AG04449 (cell line): ENCODE measurements at regions of chr1 and their contacts with region 1.

Region 1: DNA sequence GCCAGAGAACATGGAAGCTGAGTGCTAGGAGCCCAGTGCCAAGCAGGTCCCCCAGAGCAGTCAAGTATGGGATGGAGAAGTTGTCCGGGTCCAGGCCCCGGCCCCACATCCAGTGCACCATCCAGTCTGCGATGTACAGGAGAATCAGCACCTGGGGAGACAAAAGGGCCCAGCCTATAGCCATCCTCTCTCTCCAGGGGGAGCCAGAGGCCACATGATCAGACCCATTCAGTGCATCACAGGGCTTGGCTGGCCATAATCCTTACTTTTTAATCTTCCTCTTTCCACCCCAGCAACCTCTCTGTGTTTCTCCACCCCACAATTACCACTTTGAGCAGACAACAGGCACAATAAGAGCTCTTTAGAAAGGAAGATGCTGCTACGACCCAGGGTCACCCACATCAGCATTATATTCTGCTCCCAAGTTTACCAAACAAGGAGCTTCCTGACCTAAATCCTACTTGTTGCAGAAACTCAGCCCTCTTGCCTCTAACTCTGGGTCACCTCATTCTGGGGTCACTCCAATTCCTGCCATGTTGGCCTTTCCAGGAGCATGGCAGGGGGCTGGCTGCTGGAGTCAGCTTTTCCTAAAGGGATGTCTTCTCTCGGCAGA is 16.4 kb upstream of the RAB29 start:
- DNase-seq: no peak
- H3K4me3 ChIP-seq: no peak overlapping the region
- CTCF ChIP-seq: peak; percentile 89

Region 2: DNA sequence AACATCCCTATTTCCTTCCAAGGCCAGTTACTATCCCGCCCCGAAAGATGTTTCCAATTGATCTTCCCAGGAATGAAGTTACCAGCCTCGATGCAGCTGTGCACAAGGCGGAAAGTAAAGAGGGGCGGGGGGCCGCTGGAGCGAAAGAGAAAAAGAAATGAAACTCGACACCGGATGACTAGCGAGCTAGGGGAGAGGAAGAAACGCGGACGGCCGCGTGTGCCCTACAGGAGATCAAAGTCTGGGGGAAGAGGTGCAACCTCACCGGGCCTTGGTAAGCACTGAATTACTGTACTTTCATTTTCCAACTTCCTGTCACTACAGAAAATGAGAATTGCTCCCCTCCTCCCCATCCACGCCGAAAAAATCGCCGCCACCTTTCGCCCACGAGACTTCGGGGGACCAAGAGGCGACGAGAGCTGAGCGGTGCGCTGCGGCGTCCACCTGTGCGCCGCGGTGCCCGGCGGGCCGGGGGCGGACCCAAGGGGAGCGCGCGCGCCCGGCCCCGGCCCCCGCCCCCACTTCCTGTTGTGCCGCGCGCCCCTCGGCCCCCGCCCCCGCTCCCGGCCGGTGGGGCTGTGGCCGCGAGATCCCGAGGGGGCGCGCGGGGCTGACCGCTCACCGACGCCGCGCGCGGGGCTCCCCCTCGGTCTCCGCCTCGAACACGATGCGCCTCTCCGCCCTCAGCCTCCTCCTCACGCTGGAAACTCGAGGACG is 160.5 kb before region 1 on chr1:
- CTCF ChIA-PET with region 1: no interaction called
- POLR2A ChIA-PET with region 1: no interaction called
- DNase-seq: no peak
- H3K4me3 ChIP-seq: peak overlapping the region; percentile 74
- CTCF ChIP-seq: no peak

Region 3: GRCh38 chr1:205749234-205750137 is 42.2 kb before region 1 on chr1:
- CTCF ChIA-PET with region 1: no interaction called
- POLR2A ChIA-PET with region 1: no interaction called
- DNase-seq: peak; percentile 67
- H3K4me3 ChIP-seq: peak overlapping the region; percentile 83
- CTCF ChIP-seq: no peak

Region 4: GRCh38 chr1:205775015-205775716 is 16.5 kb before region 1 on chr1 and contains the start of gene RAB29:
- CTCF ChIA-PET with region 1: interaction called, 19 read pairs
- POLR2A ChIA-PET with region 1: no interaction called
- DNase-seq: no peak
- H3K4me3 ChIP-seq: peak within 1 kb of the TSS; percentile 82
- CTCF ChIP-seq: no peak

Region 5: DNA sequence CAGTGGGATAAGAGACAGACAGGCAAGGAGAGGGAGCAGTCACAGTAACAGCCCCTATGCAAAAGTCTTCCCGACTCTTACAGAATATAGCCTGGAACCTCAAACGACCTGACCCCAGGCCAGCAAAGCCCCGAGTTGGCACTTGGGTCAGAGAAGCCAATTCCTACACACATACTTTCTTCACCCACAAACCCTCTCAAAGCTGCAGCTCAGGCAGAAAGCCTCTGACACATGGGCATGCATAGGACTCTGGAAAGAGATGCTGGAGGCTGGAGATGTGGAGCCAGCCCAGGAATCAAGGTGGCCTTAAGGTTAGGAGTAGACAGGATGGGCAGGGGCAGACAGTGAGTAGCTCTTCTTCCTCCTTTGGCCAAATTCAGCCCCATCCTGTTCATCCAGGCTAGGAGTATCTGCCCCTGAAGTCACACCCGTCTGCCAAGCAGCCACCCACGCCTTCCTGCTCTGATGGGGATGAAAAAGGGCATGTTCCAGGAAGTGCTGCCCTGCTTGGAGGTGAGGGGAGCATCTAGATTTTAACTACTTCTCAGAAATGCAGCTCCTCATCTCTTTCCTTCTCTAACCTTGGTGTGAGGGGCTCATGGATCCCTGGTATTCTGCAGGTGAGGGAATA is 13.5 kb after region 1 on chr1:
- CTCF ChIA-PET with region 1: interaction called, 53 read pairs
- POLR2A ChIA-PET with region 1: no interaction called
- DNase-seq: no peak
- H3K4me3 ChIP-seq: no peak overlapping the region
- CTCF ChIP-seq: no peak

Region 6: GRCh38 chr1:205907794-205908193 is 116.1 kb after region 1 on chr1:
- CTCF ChIA-PET with region 1: interaction called, 103 read pairs
- POLR2A ChIA-PET with region 1: no interaction called
- DNase-seq: no peak
- H3K4me3 ChIP-seq: no peak overlapping the region
- CTCF ChIP-seq: peak; percentile 73

Region 7: DNA sequence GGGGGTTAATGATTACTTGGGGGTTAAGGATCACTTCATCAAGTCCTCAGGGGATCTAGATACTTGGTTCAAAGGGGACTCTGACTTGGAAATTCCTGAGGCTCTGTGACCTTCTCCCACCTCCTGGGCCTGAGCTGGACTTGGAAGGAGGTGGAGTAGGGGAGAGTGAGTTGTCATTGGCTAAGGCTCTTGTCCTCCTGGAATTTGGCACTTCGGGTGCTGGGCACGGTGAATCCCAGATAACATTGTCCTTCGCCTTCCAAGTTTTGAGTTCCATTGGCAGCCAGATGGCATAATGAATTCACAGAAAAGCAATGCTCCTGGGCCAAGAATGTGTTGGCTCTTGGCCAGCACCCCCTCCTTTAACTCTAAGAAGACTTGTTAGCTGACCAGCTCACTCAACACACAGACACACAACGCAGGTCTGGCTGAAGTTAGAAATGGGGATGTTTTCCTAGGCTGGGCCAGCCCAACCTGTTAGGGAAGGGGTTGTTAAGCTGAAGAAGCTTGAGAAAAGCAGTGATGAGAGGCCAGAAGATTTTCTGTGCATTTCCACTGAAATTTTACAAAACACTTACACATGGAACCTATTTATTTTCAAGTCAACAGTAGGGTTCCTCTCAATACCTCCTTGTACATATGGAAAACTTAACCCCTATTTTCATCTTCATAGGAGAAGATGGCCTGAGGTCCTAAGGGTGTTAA is 121.9 kb after region 1 on chr1:
- CTCF ChIA-PET with region 1: interaction called, 103 read pairs
- POLR2A ChIA-PET with region 1: no interaction called
- DNase-seq: no peak
- H3K4me3 ChIP-seq: no peak overlapping the region
- CTCF ChIP-seq: no peak

Region 8: DNA sequence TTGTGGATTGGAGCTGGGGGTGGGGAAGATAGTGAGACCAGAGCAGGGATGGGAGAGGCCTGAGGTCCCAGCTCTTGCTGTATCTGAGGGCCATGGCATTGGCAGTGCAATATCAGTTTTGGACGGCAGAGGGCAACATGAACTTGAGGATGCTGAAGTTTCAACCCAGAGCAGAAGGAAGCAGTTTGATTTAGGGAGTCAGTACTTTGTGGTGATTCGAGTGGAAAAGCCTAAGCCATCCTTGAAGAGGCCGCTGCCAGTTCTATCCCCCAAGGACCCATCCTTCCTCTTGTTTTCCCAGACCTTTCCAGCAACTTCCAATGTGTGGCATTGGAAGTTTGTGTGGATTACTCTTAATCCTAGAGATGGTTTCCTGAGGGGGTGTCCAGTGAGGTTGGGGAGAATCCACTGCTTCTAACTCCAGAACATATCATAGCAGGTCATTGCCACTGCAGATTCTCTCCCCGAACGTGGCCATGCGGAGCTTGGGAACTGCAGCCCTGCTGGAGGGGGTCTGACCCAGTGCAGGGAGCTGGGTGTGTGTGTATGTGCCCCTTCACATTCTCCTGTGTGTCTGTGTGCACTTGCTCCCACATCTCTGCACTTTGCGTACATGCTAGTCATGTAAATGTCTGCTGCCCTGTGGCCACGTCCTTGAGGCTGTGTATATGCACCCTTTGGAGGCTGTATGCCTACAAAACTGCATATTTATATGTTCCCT is 127.5 kb after region 1 on chr1:
- CTCF ChIA-PET with region 1: interaction called, 69 read pairs
- POLR2A ChIA-PET with region 1: no interaction called
- DNase-seq: peak; percentile 63
- H3K4me3 ChIP-seq: no peak overlapping the region
- CTCF ChIP-seq: peak; percentile 89

Region 9: GRCh38 chr1:206117151-206117948 is 325.7 kb after region 1 on chr1 and contains the start of gene AVPR1B:
- CTCF ChIA-PET with region 1: interaction called, 11 read pairs
- POLR2A ChIA-PET with region 1: no interaction called
- DNase-seq: no peak
- H3K4me3 ChIP-seq: peak within 1 kb of the TSS; percentile 40
- CTCF ChIP-seq: no peak